Cardiac septum (tissue), 1 donor: ENCODE measurements at regions of chr21 and their contacts with region 1.

Region 1: GRCh38 chr21:46188359-46189109 is 4.3 kb upstream of the SPATC1L start:
- DNase-seq: peak; percentile 85

Region 2: GRCh38 chr21:46065215-46065913 is 123.2 kb before region 1 on chr21:
- intact Hi-C with region 1: no loop called
- DNase-seq: peak; percentile 80

Region 3: DNA sequence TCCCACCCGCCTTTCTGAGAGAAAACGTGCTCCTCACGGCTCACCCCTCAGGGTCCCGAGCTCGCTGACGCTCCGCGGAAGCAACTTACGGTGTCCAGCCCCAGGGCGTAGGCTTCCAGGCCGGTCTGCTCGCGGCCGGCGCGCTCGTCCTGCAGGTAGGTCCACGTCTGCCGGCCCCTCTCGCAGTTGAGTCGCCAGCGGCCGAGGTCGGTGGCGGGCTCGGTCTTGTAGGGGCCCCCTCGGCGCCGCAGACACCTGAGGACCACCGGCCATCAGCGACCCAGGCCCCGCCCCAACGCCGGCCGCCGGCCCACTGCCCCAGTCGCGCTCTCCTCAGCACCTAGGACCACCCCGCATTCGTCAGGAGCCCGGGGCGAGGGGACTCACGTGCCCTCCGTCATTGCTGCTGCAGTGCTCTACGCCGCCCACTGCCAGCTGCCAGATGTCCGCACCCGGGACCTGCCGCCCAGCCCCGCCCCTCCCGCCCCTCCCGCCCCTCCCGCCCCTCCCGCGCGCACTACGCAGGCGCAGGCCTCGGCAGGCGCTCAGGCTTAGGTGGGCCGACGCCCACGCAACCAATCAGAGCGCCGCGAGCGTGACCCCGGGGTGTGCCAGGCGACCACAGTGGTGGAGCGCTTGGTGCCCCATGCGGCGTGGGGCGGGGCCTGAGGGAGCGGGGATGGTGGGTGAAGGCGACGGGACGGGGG is 40.0 kb after region 1 on chr21 and contains the start of gene LSS:
- intact Hi-C with region 1: loop called (anchors 2 kb)
- DNase-seq: peak; percentile 98
- total RNA-seq, gene LSS: 34.9 TPM

Region 4: DNA sequence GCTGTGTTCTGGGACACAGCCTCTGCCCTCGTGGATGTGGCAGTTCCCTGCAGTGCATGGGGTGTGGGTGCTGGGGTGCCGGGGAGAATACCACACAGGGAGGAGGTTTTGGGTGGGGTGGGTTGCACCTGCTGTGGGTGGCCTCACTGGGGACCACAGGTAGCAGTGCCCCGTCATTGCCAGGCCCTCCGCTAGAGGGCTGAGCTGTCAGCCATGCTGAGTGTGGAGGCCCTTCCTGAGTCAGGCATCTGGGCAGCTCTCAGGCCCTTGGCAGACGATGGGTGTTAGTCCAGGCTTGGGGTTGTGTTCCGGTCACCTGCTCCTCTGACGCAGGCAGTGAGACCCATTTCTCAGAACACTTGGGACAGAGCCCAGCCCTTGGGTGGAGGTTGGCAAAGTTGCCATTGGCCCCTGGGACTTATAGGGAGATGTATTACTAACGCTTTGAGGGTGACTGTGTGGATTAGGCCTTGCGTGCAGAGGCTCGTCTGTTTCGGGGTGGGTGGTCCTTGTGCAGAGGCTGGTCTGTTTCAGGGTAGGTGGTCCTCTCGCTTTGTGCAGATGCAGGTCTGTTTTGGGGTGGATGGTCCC is 159.4 kb after region 1 on chr21:
- intact Hi-C with region 1: no loop called
- DNase-seq: peak; percentile 84